HAP-1 (cell line): ENCODE measurements at regions of chr5 and their contacts with region 1.

Region 1: DNA sequence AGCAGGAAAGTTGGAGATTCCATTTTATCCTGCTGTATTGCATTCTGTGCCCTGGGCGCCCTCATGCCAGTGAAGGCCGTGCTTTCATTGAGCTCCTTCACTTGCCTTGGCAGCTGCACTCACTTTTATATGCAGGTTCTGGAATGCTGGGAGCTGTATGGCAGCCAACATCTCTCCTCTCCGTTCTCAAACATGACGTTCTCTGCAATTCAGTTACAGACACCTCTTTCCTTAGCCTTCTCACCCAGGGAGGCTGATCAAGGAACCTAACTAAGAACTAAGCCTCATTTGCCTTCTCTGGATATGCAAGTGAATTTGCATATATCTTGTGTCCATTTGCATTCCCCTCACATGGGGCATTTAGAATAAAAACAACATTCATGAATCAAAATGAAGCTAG is 29.4 kb upstream of the PURA start:
- DNase-seq: no peak
- H3K4me3 ChIP-seq: no peak overlapping the region
- H3K4me1 ChIP-seq: no peaks in the 10 kb centered on the region
- H3K27me3 ChIP-seq: peaks cover 23% of the 10 kb centered on the region

Region 2: GRCh38 chr5:140151730-140152597 is 67.4 kb after region 1 on chr5:
- in situ Hi-C with region 1: loop called (anchors 5 kb)
- DNase-seq: no peak
- H3K4me3 ChIP-seq: no peak overlapping the region
- H3K4me1 ChIP-seq: peaks cover 4% of the 10 kb centered on the region; the same call in 1 of the 2 replicates
- H3K27me3 ChIP-seq: no peaks in the 10 kb centered on the region